ENCODE measurements at regions of chr5 and their contacts with region 1.

Region 1: GRCh38 chr5:146049014-146049703 is 56.2 kb downstream of the PLAC8L1 start:
- DNase-seq: peak in 1 of 2 donors; percentile 35
- ATAC-seq: peak; percentile 61 to 92
- H3K4me3 ChIP-seq: no peak overlapping the region
- H3K27ac ChIP-seq: peak overlapping the region in 1 of 4 donors; percentile 13
- H3K4me1 ChIP-seq: peaks cover 0 to 4% of the 10 kb centered on the region in 2 donors
- H3K27me3 ChIP-seq: no peaks in the 10 kb centered on the region
- CTCF ChIP-seq: peak; percentile 38 to 66 (median 56)
- POLR2A ChIP-seq: no peak

Region 2: DNA sequence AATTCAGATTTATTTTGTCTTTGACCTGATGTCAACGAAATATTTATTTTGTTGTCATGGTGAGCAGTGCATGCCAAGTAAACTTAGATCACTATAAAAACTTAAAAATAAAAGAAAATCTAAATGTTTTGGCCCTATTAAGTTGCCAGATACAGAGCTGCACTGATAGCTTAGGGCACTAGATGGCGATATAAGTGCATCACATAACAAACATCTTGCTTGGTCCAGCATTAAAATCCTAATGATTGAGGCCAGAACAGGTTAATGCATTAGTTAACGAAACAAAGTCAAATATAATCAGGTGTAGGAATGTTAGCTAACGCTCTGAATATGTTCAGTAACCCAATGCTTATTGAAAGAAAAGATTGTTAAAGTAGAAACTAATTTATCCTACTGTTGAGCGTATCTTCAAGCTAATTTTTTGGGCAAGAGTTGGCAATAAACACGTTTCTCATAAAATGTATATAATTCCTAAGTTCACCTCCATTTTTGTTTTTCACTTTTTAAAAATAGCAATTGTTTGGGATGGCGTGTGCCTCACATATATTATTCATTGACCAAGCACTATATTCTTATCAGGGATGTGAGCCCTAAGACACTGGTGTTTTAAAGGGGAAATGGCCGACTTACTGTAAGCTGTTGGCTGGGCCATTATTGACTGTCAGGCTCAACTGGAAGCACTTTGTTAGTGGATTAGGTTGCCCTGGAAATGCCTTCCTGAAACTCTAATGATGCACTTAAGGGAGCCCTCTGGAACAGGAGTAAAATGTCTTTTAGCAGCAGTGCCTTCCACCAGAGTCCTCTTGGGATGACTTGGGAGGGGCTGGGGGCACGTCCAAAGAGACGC is 1845.2 kb before region 1 on chr5:
- in situ Hi-C with region 1: loop called in 2 of 4 experiments (anchors 10 to 25 kb)
- intact Hi-C with region 1: loop called (anchors 5 kb)
- DNase-seq: no peak
- ATAC-seq: peak; percentile 52 to 70
- H3K4me3 ChIP-seq: no peak overlapping the region
- H3K27ac ChIP-seq: no peak overlapping the region
- H3K4me1 ChIP-seq: peaks cover 0 to 7% of the 10 kb centered on the region in 2 donors
- H3K27me3 ChIP-seq: peaks cover 17 to 36% (median 19%) of the 10 kb centered on the region in 3 donors
- CTCF ChIP-seq: peak; percentile 50 to 83 (median 74)
- POLR2A ChIP-seq: no peak

Region 3: GRCh38 chr5:145697251-145697990 is 351.7 kb before region 1 on chr5:
- in situ Hi-C with region 1: loop called (anchors 25 kb)
- intact Hi-C with region 1: loop called (anchors 5 kb)
- DNase-seq: no peak
- ATAC-seq: no peak
- H3K4me3 ChIP-seq: no peak overlapping the region
- H3K27ac ChIP-seq: no peak overlapping the region
- H3K4me1 ChIP-seq: no peaks in the 10 kb centered on the region
- H3K27me3 ChIP-seq: no peaks in the 10 kb centered on the region
- CTCF ChIP-seq: peak in 3 of 5 experiments; percentile 18 to 32 (median 19)
- POLR2A ChIP-seq: no peak

Region 4: GRCh38 chr5:145908205-145908945 is 140.8 kb before region 1 on chr5:
- in situ Hi-C with region 1: loop called in 1 of 4 experiments (anchors 10 kb)
- intact Hi-C with region 1: loop called (anchors 5 kb)
- DNase-seq: no peak
- ATAC-seq: no peak
- H3K4me3 ChIP-seq: no peak overlapping the region
- H3K27ac ChIP-seq: no peak overlapping the region
- H3K4me1 ChIP-seq: no peaks in the 10 kb centered on the region
- H3K27me3 ChIP-seq: no peaks in the 10 kb centered on the region
- CTCF ChIP-seq: peak in 1 of 5 experiments; percentile 19
- POLR2A ChIP-seq: no peak

Region 5: GRCh38 chr5:145936401-145937131 is 112.6 kb before region 1 on chr5 and contains the start of gene SH3RF2:
- in situ Hi-C with region 1: no loop called
- intact Hi-C with region 1: loop called (anchors 5 kb)
- DNase-seq: peak; percentile 41 to 68
- ATAC-seq: peak; percentile 68 to 69
- H3K4me3 ChIP-seq: peak within 1 kb of the TSS; percentile 57 to 60 (median 59)
- H3K27ac ChIP-seq: peak within 1 kb of the TSS; percentile 80 to 90 (median 84)
- H3K4me1 ChIP-seq: peaks cover 3 to 12% of the 10 kb centered on the region in 2 donors
- H3K27me3 ChIP-seq: no peaks in the 10 kb centered on the region
- CTCF ChIP-seq: no peak
- POLR2A ChIP-seq: peak; percentile 59 to 78
- total RNA-seq, gene SH3RF2: 19.2 to 97.1 (median 39.1) TPM

Region 6: GRCh38 chr5:146986469-146986868 is 937.3 kb after region 1 on chr5:
- in situ Hi-C with region 1: no loop called
- intact Hi-C with region 1: no loop called
- DNase-seq: no peak
- ATAC-seq: no peak
- H3K4me3 ChIP-seq: no peak overlapping the region
- H3K27ac ChIP-seq: no peak overlapping the region
- H3K4me1 ChIP-seq: no peaks in the 10 kb centered on the region
- H3K27me3 ChIP-seq: no peaks in the 10 kb centered on the region
- CTCF ChIP-seq: no peak
- POLR2A ChIP-seq: no peak